Right lobe of liver (tissue), 6 donors: ENCODE measurements at regions of chr4 and their contacts with region 1.

Region 1: GRCh38 chr4:94304365-94304971 is 38.2 kb downstream of the HPGDS start:
- DNase-seq: no peak
- ATAC-seq: peak; percentile 64 to 75 (median 70)
- H3K4me3 ChIP-seq: no peak overlapping the region
- H3K27ac ChIP-seq: no peak overlapping the region
- H3K4me1 ChIP-seq: peaks cover 0 to 1% (median 0%) of the 10 kb centered on the region in 4 donors
- H3K27me3 ChIP-seq: no peaks in the 10 kb centered on the region
- CTCF ChIP-seq: peak; percentile 59 to 74 (median 72)
- POLR2A ChIP-seq: no peak

Region 2: DNA sequence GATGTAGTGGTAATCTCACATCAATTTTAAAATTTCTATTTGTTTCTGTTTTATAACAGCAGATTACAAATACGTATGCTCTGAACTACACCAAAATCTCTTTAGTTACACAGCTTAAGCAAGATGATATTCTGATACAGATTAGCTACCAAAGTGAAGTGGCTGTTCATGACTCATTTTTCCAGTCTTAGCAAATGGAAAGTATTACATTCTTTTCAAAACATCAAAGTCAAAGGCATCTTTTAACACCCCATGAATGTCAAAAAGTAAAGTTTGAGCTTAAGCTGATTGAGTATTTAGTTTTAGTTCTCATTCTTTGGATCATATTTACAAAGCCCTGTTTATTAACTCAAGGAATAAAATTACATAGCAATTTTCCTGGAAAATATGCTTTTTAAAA is 44.7 kb after region 1 on chr4:
- intact Hi-C with region 1: no loop called
- DNase-seq: no peak
- ATAC-seq: no peak
- H3K4me3 ChIP-seq: no peak overlapping the region
- H3K27ac ChIP-seq: no peak overlapping the region
- H3K4me1 ChIP-seq: no peaks in the 10 kb centered on the region
- H3K27me3 ChIP-seq: no peaks in the 10 kb centered on the region
- CTCF ChIP-seq: no peak
- POLR2A ChIP-seq: no peak

Region 3: DNA sequence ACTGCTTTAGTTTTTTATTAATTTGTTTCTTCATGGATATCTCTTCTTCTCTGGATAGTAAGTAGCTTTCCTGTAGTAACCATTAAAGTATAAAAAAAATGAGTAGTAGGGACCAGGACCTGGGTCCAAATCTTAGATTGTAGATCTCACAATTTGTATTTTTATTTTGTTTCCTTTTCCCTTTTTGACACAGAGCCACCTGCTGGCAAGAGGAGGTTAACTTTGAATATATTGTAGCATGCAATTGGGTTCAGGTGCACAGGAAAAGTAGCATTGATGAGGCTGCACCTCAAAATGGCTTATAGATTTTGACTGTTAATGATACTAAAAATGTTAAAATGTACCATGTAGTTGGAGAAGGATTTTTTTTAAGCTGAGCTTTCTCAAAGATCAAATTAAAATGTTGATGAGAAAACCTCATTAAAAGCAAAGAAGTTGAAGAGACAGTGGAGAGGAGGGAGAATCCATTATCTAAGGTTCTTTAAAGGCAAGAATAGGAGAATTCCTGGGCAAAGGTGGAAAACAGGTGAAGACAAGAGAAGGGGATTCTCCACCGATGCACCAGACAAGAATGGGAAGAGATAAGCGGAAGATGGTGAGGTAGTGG is 86.4 kb after region 1 on chr4:
- intact Hi-C with region 1: loop called in 1 of 2 experiments (anchors 10 kb)
- DNase-seq: no peak
- ATAC-seq: peak; percentile 49 to 73 (median 66)
- H3K4me3 ChIP-seq: no peak overlapping the region
- H3K27ac ChIP-seq: no peak overlapping the region
- H3K4me1 ChIP-seq: peaks cover 0 to 12% (median 0%) of the 10 kb centered on the region in 4 donors
- H3K27me3 ChIP-seq: no peaks in the 10 kb centered on the region
- CTCF ChIP-seq: peak; percentile 45 to 66 (median 58)
- POLR2A ChIP-seq: no peak

Region 4: GRCh38 chr4:94595879-94596483 is 291.5 kb after region 1 on chr4:
- intact Hi-C with region 1: loop called in 1 of 2 experiments (anchors 10 kb)
- DNase-seq: no peak
- ATAC-seq: peak; percentile 76 to 87 (median 84)
- H3K4me3 ChIP-seq: no peak overlapping the region
- H3K27ac ChIP-seq: no peak overlapping the region
- H3K4me1 ChIP-seq: peaks cover 0 to 3% (median 0%) of the 10 kb centered on the region in 4 donors
- H3K27me3 ChIP-seq: no peaks in the 10 kb centered on the region
- CTCF ChIP-seq: peak; percentile 54 to 78 (median 58)
- POLR2A ChIP-seq: no peak